Lower leg skin (tissue), 4 donors: ENCODE measurements at regions of chr13 and their contacts with region 1.

Region 1: DNA sequence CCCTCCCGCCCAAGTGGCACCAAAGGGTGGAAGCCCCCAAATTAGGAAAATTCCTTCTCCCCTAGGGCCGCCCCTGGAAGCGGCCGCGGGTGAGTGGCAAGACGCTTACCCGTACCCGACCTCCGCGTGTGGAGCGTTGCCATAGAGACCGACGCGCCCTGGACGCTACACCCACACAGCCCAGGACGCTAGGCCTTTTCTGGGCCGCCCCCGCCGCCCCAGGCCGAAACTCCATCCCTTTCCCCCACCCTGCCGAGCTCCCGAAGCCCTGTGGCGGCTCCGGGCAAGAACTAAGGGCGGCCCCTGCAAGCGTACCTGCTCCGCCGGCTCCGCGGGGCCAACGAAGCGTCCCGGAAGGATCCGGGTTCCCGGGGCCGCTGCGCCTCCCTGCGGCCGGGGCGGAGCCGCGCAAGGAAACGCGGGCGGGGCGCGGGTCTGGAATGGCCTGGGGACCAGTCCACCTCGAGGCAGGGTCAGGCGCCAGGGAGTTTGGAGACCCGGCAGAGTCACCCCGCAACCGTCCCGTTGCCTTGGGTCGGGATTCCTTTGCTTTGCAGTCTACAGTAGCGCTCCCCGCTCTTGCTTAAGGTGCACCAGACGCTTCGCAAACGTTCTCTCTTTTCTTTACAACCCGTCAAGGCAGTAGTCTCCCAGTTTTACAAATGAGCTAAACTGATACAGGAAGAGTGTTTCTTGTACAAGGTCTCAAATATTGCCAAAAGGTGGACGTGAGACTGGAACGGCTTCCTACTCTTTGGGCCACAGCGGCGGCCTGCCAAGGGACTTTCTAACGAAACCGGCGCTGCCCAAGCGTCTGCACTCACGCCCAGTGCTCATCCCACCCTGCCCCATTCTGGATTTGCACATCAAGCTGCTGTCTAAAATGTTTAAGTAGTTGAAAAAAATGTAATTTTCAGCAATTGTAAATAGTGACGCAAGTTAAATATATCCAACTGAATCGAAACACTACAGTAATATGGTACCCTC is at the start of gene NEK5:
- DNase-seq: peak; percentile 23 to 90
- H3K4me3 ChIP-seq: peak within 1 kb of the TSS; percentile 30
- CTCF ChIP-seq: no peak
- POLR2A ChIP-seq: no peak
- total RNA-seq, gene NEK5: 0.15 to 0.16 TPM in 2 of 4 donors, not detected in the others

Region 2: DNA sequence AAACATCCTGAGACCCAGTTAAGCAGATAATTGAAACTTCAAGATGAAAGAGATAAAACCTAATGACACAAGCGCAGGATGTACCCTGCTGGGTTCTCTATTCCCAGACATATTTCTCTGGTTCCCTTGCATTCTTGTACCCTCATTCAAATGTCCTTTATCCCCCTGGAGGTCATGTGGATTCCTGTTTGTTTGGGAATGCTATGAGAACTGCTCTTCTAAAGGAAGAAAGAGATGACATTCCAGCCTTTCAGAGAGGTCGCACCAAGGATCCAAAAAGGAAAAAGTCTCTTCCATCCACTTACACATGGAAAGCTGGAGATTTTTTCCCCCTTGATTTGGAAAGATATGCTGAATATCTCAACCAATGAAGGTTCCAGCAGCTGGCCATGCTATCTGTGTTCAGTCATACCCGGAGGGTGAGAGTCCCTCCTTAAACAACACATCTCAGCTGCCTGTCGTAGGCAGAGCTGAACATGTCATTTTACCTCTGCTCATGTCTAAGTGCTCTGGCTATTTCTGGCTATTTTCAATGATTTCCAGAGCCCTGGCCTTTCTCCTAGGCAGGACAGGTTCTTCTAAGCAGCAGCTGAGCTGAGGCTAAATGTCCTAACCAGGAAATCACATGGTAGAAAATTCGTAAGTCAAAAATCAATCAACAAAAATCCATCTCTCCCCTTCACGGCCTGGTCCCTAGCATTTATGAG is 1070.4 kb before region 1 on chr13:
- intact Hi-C with region 1: no loop called
- DNase-seq: no peak
- H3K4me3 ChIP-seq: no peak overlapping the region
- CTCF ChIP-seq: no peak
- POLR2A ChIP-seq: no peak

Region 3: GRCh38 chr13:51995677-51996551 is 133.1 kb before region 1 on chr13:
- intact Hi-C with region 1: loop called (anchors 5 kb)
- DNase-seq: no peak
- H3K4me3 ChIP-seq: no peak overlapping the region
- CTCF ChIP-seq: no peak
- POLR2A ChIP-seq: no peak